Activated CD4-positive, alpha-beta T cell treated with anti-CD3 and anti-CD28 coated beads for 36 hours (primary cell): ENCODE measurements at regions of chr5 and their contacts with region 1.

Region 1: GRCh38 chr5:181181650-181182565 is 23.1 kb downstream of the TRIM7 start:
- DNase-seq: peak; percentile 78
- ATAC-seq: peak; percentile 63
- H3K4me3 Mint-ChIP-seq: no peak overlapping the region
- H3K27ac Mint-ChIP-seq: no peak overlapping the region
- H3K4me1 Mint-ChIP-seq: peaks cover 25% of the 10 kb centered on the region
- H3K27me3 Mint-ChIP-seq: no peaks in the 10 kb centered on the region

Region 2: DNA sequence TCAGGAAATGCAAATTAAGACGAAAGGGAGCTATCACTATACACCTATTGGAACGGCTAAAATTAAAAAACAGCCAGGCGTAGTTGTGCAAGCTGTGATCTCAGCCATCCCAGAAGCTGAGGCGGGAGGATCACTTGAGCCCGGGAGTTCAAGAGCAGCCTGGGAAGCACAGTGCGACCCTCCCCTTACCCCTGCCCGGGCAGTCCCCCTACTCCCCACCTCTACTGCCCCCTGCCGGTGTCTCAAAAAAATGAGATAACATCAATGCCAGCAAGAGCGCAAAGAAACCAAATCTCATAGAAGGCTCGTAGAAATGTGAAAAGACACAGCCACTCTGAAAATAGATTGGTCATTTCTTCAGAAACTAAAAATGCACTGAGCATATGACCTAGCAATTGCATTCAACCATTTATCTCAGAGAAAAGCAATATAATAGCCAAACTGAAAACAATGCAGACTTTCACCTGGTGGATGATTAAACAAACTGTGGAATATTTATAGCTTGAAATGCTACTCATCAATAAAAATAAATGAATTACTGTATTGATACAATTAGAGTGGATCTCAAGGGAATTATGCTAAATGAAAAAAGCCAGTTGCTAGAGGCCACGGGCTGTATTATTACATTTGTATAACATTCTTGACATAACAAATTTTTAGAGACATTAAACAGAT is 14.0 kb before region 1 on chr5:
- CTCF ChIA-PET with region 1: interaction called, 36 read pairs
- POLR2A ChIA-PET with region 1: interaction called, 9 read pairs
- intact Hi-C with region 1: no loop called
- DNase-seq: peak; percentile 73
- ATAC-seq: no peak
- H3K4me3 Mint-ChIP-seq: no peak overlapping the region
- H3K27ac Mint-ChIP-seq: no peak overlapping the region
- H3K4me1 Mint-ChIP-seq: peaks cover 86% of the 10 kb centered on the region
- H3K27me3 Mint-ChIP-seq: peaks cover 33% of the 10 kb centered on the region

Region 3: DNA sequence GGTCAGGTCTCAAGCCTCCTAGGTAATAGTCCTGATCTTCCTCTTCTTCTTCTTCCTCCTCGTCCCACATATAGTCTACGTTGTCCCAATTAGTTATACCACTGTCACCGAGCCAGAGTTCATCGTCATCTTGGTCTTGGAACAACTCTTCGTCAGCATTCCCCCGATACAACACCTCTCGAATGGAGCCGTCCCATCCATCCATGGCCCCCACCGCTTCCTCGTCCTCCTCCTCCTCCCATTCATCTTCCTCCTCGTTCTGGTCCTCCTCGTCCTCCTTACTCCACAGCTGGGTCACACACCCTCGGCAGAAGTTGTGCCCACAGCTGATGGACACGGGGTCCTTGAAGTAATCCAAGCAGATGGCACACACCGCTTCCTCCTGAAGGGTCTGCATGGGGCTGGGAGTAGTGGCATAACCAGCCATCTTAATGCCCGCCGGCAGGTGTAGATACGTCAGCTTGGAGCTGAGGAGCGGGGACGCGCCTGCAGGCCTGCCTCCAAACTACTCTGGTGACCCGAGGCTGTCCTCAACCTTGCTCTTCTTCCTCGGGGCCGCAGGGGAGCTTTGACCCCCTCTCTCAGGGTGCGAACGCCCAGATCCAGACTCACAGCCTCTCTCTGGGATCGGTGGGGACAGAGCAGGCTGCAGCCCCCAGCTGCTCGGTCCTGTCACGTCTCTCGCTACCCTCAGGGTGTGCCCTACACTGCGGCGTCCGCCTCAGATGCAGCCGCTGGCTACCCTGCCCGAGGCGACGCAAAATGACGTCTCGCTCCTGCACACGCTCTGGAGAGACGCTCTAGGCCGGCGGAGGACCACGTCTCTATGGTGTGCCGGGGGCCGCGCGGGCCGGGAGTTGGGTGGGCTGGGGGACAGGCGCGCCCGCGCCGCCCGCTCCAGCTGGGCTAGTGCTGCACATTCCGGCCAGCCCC is 78.7 kb after region 1 on chr5 and contains the start of gene TRIM52:
- CTCF ChIA-PET with region 1: interaction called, 10 read pairs
- POLR2A ChIA-PET with region 1: interaction called, 4 read pairs
- intact Hi-C with region 1: loop called in 1 of 2 experiments (anchors 1 kb)
- DNase-seq: peak; percentile 95
- ATAC-seq: peak; percentile 85
- H3K4me3 Mint-ChIP-seq: peak within 1 kb of the TSS; percentile 91
- H3K27ac Mint-ChIP-seq: peak within 1 kb of the TSS; percentile 95
- H3K4me1 Mint-ChIP-seq: peaks cover 38% of the 10 kb centered on the region
- H3K27me3 Mint-ChIP-seq: no peaks in the 10 kb centered on the region
- total RNA-seq, gene TRIM52: 10.4 to 13.1 TPM